Posterior cingulate gyrus (tissue), 11 donors: ENCODE measurements at regions of chr12 and their contacts with region 1.

Region 1: GRCh38 chr12:129903956-129904829 is at the start of gene TMEM132D:
- DNase-seq: peak in 9 of 10 donors; percentile 29 to 92 (median 55)

Region 2: DNA sequence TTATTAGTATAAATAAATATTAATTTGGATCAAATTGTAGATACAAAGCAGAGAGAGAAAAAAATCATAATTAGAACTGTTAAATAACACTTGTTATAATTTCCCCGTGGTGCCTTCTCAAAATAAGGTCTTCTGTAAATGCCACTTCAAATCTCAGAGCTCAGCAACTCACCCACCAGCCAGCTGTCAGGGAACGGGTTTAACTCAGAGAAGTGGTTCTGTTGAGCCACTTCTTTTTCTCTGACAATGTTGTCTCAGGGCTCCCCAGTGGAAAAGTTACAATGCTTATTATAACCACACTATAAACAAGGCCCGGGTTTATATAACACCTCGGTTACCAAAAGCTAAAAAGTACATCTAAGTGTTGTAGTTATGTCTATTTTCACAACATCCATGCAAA is 598.3 kb before region 1 on chr12:
- intact Hi-C with region 1: loop called (anchors 5 kb)
- DNase-seq: peak in 5 of 10 donors; percentile 23 to 85 (median 48)

Region 3: DNA sequence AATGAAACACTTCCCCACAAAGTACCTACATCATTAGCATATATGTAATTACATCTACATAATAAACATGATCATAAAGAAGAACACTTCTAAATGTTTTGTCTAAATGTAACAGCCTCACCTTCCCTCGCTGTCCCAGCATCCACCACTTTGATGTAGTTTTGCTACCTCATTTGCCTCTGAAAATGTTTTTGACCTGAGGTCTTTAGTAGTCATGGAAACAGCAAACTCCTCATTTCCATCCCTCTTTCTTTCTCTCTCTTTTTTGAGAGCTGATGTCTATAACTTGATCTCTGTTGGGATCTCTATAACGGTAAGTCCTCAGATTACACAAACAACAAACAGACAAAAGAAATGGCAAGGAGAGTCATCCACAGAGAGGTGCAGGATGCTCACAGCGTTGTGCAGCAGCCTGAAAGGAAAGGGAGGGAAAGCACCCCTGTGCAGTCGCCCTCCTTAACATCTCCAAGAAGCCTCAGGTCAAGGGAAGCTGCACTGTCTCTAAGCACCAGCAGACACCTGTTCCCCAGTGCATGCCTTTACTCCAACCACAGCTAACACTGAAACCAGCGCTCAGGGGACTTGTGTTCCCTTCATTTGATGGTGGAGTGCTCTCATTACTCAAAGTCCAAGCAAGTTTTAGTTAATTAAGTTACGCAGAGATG is 269.0 kb before region 1 on chr12:
- intact Hi-C with region 1: no loop called
- DNase-seq: no peak

Region 4: DNA sequence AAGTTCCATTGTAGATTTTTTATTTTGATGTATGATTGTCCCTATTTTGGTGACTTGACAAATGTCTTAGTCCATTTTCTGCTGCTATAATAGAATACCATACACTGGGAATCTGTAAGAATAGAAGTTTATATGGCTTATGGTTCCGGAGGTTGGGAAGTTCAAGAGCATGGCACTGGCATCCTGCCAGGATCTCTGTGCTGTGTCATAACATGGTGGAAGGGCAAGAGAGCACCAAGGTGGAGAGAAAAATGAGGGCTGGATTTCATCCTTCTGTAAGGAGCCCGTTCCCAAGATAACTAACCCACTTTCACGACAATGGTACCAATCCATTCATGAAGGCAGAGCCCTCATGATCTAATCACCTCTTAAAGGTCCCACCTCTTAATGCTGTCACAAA is 177.1 kb before region 1 on chr12:
- intact Hi-C with region 1: no loop called
- DNase-seq: no peak

Region 5: GRCh38 chr12:130064999-130065398 is 160.8 kb after region 1 on chr12:
- intact Hi-C with region 1: no loop called
- DNase-seq: no peak